ENCODE measurements at regions of chr17 and their contacts with region 1.

Region 1: GRCh38 chr17:2054512-2055291 is at the start of gene HIC1:
- DNase-seq: peak in 9 of 10 donors; percentile 38 to 95 (median 57)

Region 2: DNA sequence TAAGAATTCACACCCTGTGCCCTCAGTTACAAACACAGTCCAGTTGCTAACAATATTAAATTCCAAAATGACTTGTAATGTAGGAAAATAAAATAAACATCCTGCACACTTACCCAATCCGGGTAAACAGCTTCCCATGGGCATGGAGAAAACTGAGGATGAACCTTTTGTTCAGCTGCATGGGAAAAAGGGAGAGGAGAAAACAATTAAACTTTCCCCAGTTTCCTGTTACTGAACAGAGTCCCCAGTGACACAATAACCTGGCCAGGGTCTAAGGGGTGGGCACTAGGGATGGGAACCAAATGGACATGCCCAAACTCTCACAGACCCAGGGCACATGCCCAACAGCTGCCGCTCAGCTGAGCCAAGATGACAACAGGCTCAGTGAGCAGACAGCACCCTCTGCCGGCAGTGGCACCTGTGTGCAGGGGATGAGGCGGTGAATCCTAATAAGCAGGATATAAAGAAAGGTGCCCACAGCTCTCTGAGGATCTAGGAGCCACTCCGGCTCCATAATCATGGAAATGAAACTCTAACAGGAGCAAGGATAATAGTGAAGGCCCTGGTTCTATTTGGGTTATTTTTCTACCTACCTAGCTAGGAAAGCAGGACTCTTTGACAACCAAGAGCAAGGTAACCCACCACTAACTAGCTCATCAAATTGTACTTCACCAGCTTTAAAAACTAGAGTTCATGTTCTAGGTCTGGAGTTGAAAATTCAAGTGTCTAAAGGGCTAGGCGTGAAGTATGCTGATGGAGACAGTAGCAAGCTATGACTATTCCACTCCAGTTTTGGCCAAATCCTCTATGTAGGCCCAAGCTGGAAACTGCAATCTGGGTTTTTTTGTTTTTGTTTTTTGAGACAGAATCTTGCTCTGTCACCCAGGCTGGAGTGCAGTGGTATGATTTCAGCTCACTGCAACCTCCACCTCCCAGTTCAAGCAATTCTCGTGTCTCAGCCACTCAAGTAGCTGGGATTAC is 190.1 kb after region 1 on chr17:
- intact Hi-C with region 1: loop called (anchors 1 kb)
- DNase-seq: peak; percentile 54 to 98 (median 86)

Region 3: DNA sequence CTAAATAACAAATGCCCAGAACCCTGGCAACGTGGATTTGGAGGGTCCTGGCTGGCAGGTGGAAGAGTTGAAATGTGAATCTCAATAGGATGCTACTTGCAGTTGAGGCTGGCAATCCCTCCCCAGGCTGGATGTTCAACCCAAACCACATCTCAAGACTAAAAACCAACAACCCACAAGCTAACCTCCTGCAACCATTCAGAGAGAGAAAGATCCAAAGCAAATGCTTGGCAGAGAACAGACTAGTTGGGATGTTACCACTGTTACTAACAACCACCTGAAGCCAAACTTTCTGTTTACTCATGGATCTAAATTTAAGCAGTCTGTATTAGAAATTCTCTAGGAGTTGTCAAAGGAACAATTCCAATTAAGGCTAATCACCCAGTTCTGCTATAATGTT is 221.0 kb after region 1 on chr17:
- intact Hi-C with region 1: no loop called
- DNase-seq: no peak

Measured in posterior cingulate gyrus (tissue), 11 donors.